ENCODE measurements at regions of chr1 and their contacts with region 1.

Region 1: DNA sequence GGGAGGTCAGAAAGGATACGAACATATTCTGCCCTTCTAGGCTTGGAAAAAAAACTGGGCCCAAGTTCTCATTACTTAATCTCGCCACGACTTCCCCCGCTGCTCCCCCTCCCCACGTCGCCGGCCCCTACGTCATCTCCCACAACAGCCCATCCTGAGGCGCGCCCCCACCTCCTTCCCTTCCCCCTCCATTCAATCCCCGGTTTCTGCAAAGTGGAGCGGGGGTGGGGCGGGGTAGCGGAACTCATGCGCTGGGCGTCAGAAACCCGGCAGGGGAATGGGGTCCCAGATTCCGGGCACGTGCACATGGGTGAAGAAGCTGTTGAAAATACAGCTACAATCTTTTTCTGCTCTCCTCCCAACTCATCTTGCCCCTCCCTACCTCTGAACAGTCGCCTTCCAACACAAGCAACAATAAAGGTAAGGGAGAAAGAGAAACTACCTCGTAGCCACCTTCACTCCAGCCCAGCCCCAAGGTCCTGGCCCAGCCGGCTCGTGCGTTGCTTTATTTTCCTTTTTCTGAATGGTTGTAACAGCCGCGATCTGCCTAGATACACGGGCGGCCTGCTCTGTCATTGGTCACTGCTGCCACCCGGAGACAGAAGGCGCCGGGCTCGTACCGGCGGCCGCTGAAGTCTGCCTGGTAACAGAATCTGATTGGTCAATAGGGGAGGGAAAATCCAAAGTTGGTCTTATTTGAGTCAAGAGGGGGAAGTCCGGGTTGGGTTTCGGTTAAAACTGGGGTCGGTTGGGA is at the start of gene RFX5:
- DNase-seq: peak; percentile 95
- ATAC-seq: peak; percentile 98
- H3K4me3 ChIP-seq: peak within 1 kb of the TSS; percentile 62 to 73 (median 72)
- H3K27ac ChIP-seq: peak within 1 kb of the TSS; percentile 87
- H3K4me1 ChIP-seq: peaks cover 19% of the 10 kb centered on the region
- H3K27me3 ChIP-seq: no peaks in the 10 kb centered on the region
- CTCF ChIP-seq: 0 out of 2 replicates have a peak, but pooled peaks have one; percentile 12
- EP300 ChIP-seq: peak in 1 of 2 experiments; percentile 61; a peak in 2 of 4 replicates
- POLR2A ChIP-seq: peak; percentile 48 to 76; a peak in 3 of 4 replicates
- RAD21 ChIP-seq: no peak
- total RNA-seq, gene RFX5: 32.0 and 36.2 TPM in 2 replicates

Region 2: DNA sequence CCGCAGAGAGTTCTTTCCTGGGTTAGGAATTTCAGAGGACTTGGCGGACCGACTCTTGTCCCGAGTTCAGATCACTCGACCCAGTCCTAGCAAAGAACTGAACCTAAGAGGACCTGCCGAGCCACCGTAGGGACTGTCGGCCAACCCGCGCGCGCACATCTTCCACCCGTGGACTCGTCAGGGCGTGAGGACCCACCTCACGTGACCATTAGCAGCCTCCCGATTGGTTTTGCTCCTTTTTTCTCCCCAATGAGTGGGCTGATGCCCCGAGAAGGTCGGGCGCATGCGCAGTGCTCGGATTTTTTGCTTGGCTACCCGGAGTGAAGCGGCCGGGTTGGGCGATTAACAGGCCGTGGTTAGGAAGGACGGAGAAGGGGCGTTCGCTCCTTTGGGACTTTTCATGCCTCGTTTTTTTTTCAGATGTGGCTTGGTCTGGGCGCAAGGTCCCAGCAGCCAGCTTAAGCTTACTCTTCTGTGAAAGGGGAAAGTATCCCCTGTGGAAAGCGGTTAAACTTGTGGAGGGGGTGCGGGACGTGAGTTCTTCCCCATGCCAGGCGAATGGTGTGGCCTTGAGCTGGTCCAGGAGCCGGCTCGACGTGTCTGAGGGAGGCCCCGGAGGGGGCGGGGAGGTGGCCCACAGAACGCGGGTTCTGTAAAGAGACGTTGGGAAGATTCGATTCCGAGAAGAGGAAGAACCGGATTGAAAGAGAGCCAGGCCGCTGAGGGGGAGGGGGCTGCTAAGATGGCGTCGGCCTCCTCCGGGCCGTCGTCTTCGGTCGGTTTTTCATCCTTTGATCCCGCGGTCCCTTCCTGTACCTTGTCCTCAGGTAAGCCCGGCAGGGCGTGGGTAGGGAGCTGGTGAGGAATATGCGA is 148.5 kb before region 1 on chr1 and contains the start of gene PIP5K1A:
- CTCF ChIA-PET with region 1: no interaction called
- POLR2A ChIA-PET with region 1: no interaction called
- in situ Hi-C with region 1: no loop called
- intact Hi-C with region 1: loop called (anchors 5 kb)
- DNase-seq: peak; percentile 97
- ATAC-seq: peak; percentile 76
- H3K4me3 ChIP-seq: peak within 1 kb of the TSS; percentile 87 to 95 (median 94)
- H3K27ac ChIP-seq: peak within 1 kb of the TSS; percentile 93
- H3K4me1 ChIP-seq: peaks cover 34% of the 10 kb centered on the region
- H3K27me3 ChIP-seq: no peaks in the 10 kb centered on the region; a peak in 1 of 5 replicates
- CTCF ChIP-seq: no peak
- EP300 ChIP-seq: no peak
- POLR2A ChIP-seq: peak; percentile 74 to 84
- RAD21 ChIP-seq: no peak
- total RNA-seq, gene PIP5K1A: 43.8 and 45.3 TPM in 2 replicates